Prostate gland (tissue), 2 donors: ENCODE measurements at regions of chr16 and their contacts with region 1.

Region 1: GRCh38 chr16:70298988-70299938 is at the start of gene DDX19B:
- DNase-seq: peak; percentile 77
- H3K4me3 ChIP-seq: peak within 1 kb of the TSS; percentile 85 to 94
- H3K27ac ChIP-seq: peak within 1 kb of the TSS; percentile 98
- H3K4me1 ChIP-seq: no peaks in the 10 kb centered on the region
- H3K27me3 ChIP-seq: no peaks in the 10 kb centered on the region
- CTCF ChIP-seq: peak in 1 of 4 experiments; percentile 5
- POLR2A ChIP-seq: no peak
- total RNA-seq, gene DDX19B: 27.4 to 37.0 TPM

Region 2: GRCh38 chr16:70267516-70267915 is 31.7 kb before region 1 on chr16:
- intact Hi-C with region 1: no loop called
- DNase-seq: no peak
- H3K4me3 ChIP-seq: no peak overlapping the region
- H3K27ac ChIP-seq: no peak overlapping the region
- H3K4me1 ChIP-seq: no peaks in the 10 kb centered on the region
- H3K27me3 ChIP-seq: no peaks in the 10 kb centered on the region
- CTCF ChIP-seq: peak in 3 of 4 experiments; percentile 31 to 56 (median 37)
- POLR2A ChIP-seq: no peak

Region 3: DNA sequence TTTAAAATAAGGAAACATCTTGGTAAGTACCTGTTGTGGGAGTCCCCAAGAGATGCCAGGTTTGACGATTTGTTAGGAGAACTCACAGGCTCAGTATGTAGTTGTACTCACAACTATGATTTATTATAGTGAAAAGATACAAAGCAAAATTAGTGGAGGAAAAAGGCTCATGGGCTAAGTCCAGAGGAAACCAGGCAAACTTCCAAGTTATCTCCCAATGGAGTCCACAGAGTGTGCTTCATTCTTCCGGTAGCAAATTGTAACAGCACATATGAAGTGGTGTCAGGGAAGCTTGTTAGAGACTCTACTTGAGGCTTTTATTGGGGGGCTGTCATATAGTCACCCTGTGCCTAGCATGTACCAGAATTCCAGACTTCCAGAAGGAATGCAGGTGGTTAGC is 49.7 kb after region 1 on chr16:
- intact Hi-C with region 1: loop called (anchors 5 kb)
- DNase-seq: no peak
- H3K4me3 ChIP-seq: no peak overlapping the region
- H3K27ac ChIP-seq: no peak overlapping the region
- H3K4me1 ChIP-seq: peaks cover 6% of the 10 kb centered on the region
- H3K27me3 ChIP-seq: no peaks in the 10 kb centered on the region
- CTCF ChIP-seq: no peak
- POLR2A ChIP-seq: no peak

Region 4: GRCh38 chr16:70523076-70523742 is 223.9 kb after region 1 on chr16 and contains the start of gene COG4:
- intact Hi-C with region 1: no loop called
- DNase-seq: peak; percentile 77
- H3K4me3 ChIP-seq: peak within 1 kb of the TSS; percentile 63
- H3K27ac ChIP-seq: peak within 1 kb of the TSS; percentile 86 to 89
- H3K4me1 ChIP-seq: peaks cover 8% of the 10 kb centered on the region
- H3K27me3 ChIP-seq: no peaks in the 10 kb centered on the region
- CTCF ChIP-seq: peak in 1 of 4 experiments; percentile 2
- POLR2A ChIP-seq: peak; percentile 49
- total RNA-seq, gene COG4: 34.6 to 62.0 TPM